CD4-positive, alpha-beta T cell (primary cell): ENCODE measurements at regions of chr7 and their contacts with region 1.

Region 1: GRCh38 chr7:67006971-67007370 is 10.3 kb downstream of the TYW1 start:
- DNase-seq: no peak
- ATAC-seq: no peak
- H3K4me3 ChIP-seq: no peak overlapping the region
- H3K4me3 Mint-ChIP-seq: no peak overlapping the region
- H3K27ac ChIP-seq: no peak overlapping the region
- H3K27ac Mint-ChIP-seq: no peak overlapping the region
- H3K4me1 ChIP-seq: no peaks in the 10 kb centered on the region
- H3K4me1 Mint-ChIP-seq: peaks cover 11% of the 10 kb centered on the region
- H3K27me3 ChIP-seq: no peaks in the 10 kb centered on the region
- H3K27me3 Mint-ChIP-seq: no peaks in the 10 kb centered on the region
- CTCF ChIP-seq: no peak

Region 2: DNA sequence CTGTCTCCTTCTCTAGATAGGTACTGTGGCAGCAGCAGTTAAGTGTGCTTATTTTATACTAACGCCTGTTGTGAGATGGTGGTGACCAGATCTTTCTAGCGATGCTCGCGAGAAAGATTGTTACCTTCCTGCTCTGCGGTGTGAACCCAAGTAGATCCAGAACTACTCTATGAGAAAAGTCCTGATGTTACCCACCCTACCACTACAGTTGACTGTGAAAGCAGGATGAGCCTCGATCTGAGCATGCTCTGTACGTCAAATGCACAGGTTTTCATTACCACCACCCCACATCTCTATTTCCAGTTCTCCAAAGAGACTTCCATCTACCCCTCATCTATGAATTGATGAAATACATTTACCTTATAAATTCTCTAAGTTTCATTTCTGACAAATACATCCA is 442.9 kb before region 1 on chr7:
- CTCF ChIA-PET with region 1: no interaction called
- POLR2A ChIA-PET with region 1: no interaction called
- intact Hi-C with region 1: loop called in 1 of 2 experiments (anchors 5 kb)
- DNase-seq: no peak
- ATAC-seq: no peak
- H3K4me3 ChIP-seq: no peak overlapping the region
- H3K4me3 Mint-ChIP-seq: no peak overlapping the region
- H3K27ac ChIP-seq: no peak overlapping the region
- H3K27ac Mint-ChIP-seq: peak overlapping the region; percentile 84
- H3K4me1 ChIP-seq: no peaks in the 10 kb centered on the region
- H3K4me1 Mint-ChIP-seq: peaks cover 6% of the 10 kb centered on the region
- H3K27me3 ChIP-seq: no peaks in the 10 kb centered on the region
- H3K27me3 Mint-ChIP-seq: no peaks in the 10 kb centered on the region
- CTCF ChIP-seq: no peak